ENCODE measurements at regions of chr2 and their contacts with region 1.

Region 1: DNA sequence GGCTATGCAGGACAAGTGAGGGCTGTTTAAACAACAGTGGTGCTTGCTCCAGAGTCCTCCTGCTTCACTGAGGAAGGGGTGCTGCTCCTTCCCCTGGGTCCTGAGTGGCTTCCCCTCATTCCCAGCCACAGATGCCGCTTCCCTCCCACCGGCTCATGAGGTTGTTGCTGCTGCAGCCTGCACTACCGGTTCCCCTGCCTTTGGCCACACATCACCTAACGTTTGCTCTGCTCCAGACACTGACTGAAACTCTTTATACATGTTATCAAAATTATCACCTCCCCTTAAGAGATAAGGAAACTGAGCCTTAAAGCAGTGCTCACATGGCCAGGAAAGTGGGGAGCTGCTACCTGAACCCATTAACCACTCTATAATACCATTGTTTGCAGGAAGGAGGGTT is 130.8 kb upstream of the LGALSL start:
- DNase-seq: no peak
- ATAC-seq: no peak
- H3K4me3 ChIP-seq: no peak overlapping the region
- H3K27ac ChIP-seq: no peak overlapping the region
- H3K4me1 ChIP-seq: no peaks in the 10 kb centered on the region
- H3K27me3 ChIP-seq: no peaks in the 10 kb centered on the region
- CTCF ChIP-seq: no peak
- POLR2A ChIP-seq: no peak

Region 2: DNA sequence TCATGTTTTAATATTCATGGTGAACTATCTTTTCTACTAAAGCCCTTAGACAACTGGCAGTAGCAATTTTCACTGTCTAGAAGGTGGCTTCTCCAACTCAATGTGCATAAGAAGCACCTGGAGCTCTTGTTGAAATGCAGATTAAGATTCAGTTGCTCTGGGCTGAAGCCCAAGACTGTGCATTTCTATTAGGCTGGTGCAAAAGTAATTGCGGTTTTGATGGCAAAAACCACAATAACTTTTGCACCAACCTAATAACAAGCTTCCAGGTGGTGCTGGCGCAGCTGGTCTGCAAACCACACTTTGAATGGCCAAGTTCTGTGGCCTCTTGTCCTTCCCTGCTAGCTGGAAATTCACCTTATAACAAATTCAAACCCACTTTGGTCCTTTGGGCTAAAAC is 277.3 kb before region 1 on chr2:
- intact Hi-C with region 1: loop called (anchors 5 to 10 kb)
- DNase-seq: no peak
- ATAC-seq: no peak
- H3K4me3 ChIP-seq: no peak overlapping the region
- H3K27ac ChIP-seq: no peak overlapping the region
- H3K4me1 ChIP-seq: no peaks in the 10 kb centered on the region
- H3K27me3 ChIP-seq: no peaks in the 10 kb centered on the region
- CTCF ChIP-seq: no peak
- POLR2A ChIP-seq: no peak

Region 3: GRCh38 chr2:64568836-64569235 is 245.6 kb after region 1 on chr2:
- intact Hi-C with region 1: no loop called
- DNase-seq: no peak
- ATAC-seq: no peak
- H3K4me3 ChIP-seq: no peak overlapping the region
- H3K27ac ChIP-seq: no peak overlapping the region
- H3K4me1 ChIP-seq: peaks cover 0 to 8% (median 0%) of the 10 kb centered on the region in 4 donors
- H3K27me3 ChIP-seq: no peaks in the 10 kb centered on the region
- CTCF ChIP-seq: no peak
- POLR2A ChIP-seq: no peak

Measured in right lobe of liver (tissue), 6 donors.